CD4-positive, alpha-beta memory T cell (primary cell): ENCODE measurements at regions of chr10 and their contacts with region 1.

Region 1: GRCh38 chr10:14571866-14572507 is 202.7 kb downstream of the FAM107B start:
- DNase-seq: peak; percentile 86 to 91 (median 89)
- H3K4me3 ChIP-seq: peak overlapping the region; percentile 70 to 75
- H3K4me3 Mint-ChIP-seq: peak overlapping the region; percentile 90 to 98 (median 94)
- H3K27ac ChIP-seq: peak overlapping the region; percentile 82
- H3K27ac Mint-ChIP-seq: peak overlapping the region; percentile 94 to 100 (median 97)
- H3K4me1 ChIP-seq: peaks cover 93% of the 10 kb centered on the region
- H3K4me1 Mint-ChIP-seq: peaks cover 58 to 97% (median 79%) of the 10 kb centered on the region in 4 donors
- H3K27me3 ChIP-seq: no peaks in the 10 kb centered on the region
- H3K27me3 Mint-ChIP-seq: no peaks in the 10 kb centered on the region

Region 2: DNA sequence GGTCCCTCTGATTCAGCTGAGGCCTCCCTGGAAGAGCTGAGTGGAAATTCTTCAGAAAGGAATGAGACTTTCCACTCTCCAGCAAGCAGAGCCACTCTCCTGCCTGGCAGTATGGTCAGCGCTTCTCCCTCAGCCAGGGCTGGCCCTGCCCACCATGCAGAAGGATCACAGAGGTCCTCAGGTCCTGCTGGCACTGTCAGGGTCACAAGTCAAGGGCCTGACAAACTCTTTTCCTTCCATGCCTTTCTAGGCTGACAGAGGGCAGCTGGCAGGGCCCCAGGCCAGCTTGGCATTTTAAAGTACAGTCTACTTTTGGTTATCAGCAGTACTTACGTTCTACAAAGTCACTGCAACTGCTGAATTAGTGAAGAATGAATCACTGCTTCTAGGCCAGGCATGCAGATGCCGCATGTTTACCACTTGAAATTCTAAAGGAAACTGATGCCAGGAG is 121.9 kb before region 1 on chr10:
- CTCF ChIA-PET with region 1: no interaction called
- POLR2A ChIA-PET with region 1: no interaction called
- intact Hi-C with region 1: no loop called
- DNase-seq: no peak
- H3K4me3 ChIP-seq: no peak overlapping the region
- H3K4me3 Mint-ChIP-seq: no peak overlapping the region
- H3K27ac ChIP-seq: no peak overlapping the region
- H3K27ac Mint-ChIP-seq: no peak overlapping the region
- H3K4me1 ChIP-seq: no peaks in the 10 kb centered on the region
- H3K4me1 Mint-ChIP-seq: no peaks in the 10 kb centered on the region
- H3K27me3 ChIP-seq: no peaks in the 10 kb centered on the region
- H3K27me3 Mint-ChIP-seq: peaks cover 0 to 1% of the 10 kb centered on the region in 2 donors

Region 3: GRCh38 chr10:14536241-14537213 is 35.5 kb before region 1 on chr10:
- CTCF ChIA-PET with region 1: interaction called, 6 read pairs
- POLR2A ChIA-PET with region 1: interaction called, 11 read pairs
- intact Hi-C with region 1: no loop called
- DNase-seq: peak in 1 of 5 donors; percentile 30
- H3K4me3 ChIP-seq: no peak overlapping the region
- H3K4me3 Mint-ChIP-seq: peak overlapping the region in 1 of 8 donors; percentile 15
- H3K27ac ChIP-seq: peak overlapping the region; percentile 27
- H3K27ac Mint-ChIP-seq: peak overlapping the region; percentile 15 to 94 (median 83)
- H3K4me1 ChIP-seq: peaks cover 91% of the 10 kb centered on the region
- H3K4me1 Mint-ChIP-seq: peaks cover 71 to 100% (median 87%) of the 10 kb centered on the region in 4 donors
- H3K27me3 ChIP-seq: no peaks in the 10 kb centered on the region
- H3K27me3 Mint-ChIP-seq: no peaks in the 10 kb centered on the region

Region 4: GRCh38 chr10:14556285-14556956 is 15.6 kb before region 1 on chr10:
- CTCF ChIA-PET with region 1: interaction called, 6 read pairs
- POLR2A ChIA-PET with region 1: interaction called, 640 read pairs
- intact Hi-C with region 1: no loop called
- DNase-seq: peak in 4 of 5 donors; percentile 34 to 64 (median 47)
- H3K4me3 ChIP-seq: no peak overlapping the region
- H3K4me3 Mint-ChIP-seq: peak overlapping the region; percentile 53 to 87 (median 75)
- H3K27ac ChIP-seq: peak overlapping the region; percentile 65
- H3K27ac Mint-ChIP-seq: peak overlapping the region; percentile 93 to 97 (median 94)
- H3K4me1 ChIP-seq: peaks cover 100% of the 10 kb centered on the region
- H3K4me1 Mint-ChIP-seq: peaks cover 80 to 99% (median 89%) of the 10 kb centered on the region in 4 donors
- H3K27me3 ChIP-seq: no peaks in the 10 kb centered on the region
- H3K27me3 Mint-ChIP-seq: no peaks in the 10 kb centered on the region